ENCODE measurements at regions of chr2 and their contacts with region 1.

Region 1: DNA sequence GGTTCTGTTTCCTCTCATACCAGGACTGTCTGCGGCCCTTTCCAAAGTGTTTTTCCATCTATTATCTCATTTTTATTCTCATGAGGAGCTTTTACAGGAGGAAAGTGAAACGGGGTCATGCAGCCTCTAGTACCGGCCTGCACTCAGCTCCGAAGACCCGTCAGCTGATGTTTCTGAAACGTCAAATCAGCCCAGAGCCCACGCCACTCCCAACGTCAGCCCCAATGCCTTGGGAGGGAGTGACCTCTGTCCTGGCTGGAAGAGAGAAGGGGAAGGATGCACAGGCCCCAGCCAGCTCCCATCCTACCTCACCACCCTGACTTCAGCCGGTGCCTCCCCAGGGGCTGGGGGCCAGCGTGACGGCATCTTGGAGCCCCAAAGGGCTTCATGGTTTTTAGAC is 58.5 kb downstream of the ADCY3 start:
- DNase-seq: no peak
- H3K4me3 ChIP-seq: no peak overlapping the region
- H3K27ac ChIP-seq: no peak overlapping the region
- H3K4me1 ChIP-seq: no peaks in the 10 kb centered on the region
- H3K27me3 ChIP-seq: no peaks in the 10 kb centered on the region
- CTCF ChIP-seq: no peak

Region 2: GRCh38 chr2:24948506-24948905 is 87.0 kb after region 1 on chr2:
- CTCF ChIA-PET with region 1: no interaction called
- dilution Hi-C with region 1: no loop called
- in situ Hi-C with region 1: no loop called
- intact Hi-C with region 1: loop called (anchors 1 kb)
- DNase-seq: no peak
- H3K4me3 ChIP-seq: no peak overlapping the region
- H3K27ac ChIP-seq: no peak overlapping the region
- H3K4me1 ChIP-seq: peaks cover 9% of the 10 kb centered on the region
- H3K27me3 ChIP-seq: no peaks in the 10 kb centered on the region
- CTCF ChIP-seq: no peak

Measured in mammary epithelial cell (primary cell).